ENCODE measurements at regions of chr1 and their contacts with region 1.

Region 1: GRCh38 chr1:82503822-82504221 is 703.1 kb downstream of the ADGRL2 start:
- DNase-seq: peak; percentile 29
- H3K4me3 ChIP-seq: no peak overlapping the region
- CTCF ChIP-seq: no peak

Region 2: GRCh38 chr1:82464362-82465001 is 39.3 kb before region 1 on chr1:
- in situ Hi-C with region 1: loop called (anchors 5 kb)
- DNase-seq: peak; percentile 95
- H3K4me3 ChIP-seq: no peak overlapping the region
- CTCF ChIP-seq: no peak

Measured in astrocyte of the cerebellum (primary cell).